Heart left ventricle (tissue), 16 donors: ENCODE measurements at regions of chr7 and their contacts with region 1.

Region 1: DNA sequence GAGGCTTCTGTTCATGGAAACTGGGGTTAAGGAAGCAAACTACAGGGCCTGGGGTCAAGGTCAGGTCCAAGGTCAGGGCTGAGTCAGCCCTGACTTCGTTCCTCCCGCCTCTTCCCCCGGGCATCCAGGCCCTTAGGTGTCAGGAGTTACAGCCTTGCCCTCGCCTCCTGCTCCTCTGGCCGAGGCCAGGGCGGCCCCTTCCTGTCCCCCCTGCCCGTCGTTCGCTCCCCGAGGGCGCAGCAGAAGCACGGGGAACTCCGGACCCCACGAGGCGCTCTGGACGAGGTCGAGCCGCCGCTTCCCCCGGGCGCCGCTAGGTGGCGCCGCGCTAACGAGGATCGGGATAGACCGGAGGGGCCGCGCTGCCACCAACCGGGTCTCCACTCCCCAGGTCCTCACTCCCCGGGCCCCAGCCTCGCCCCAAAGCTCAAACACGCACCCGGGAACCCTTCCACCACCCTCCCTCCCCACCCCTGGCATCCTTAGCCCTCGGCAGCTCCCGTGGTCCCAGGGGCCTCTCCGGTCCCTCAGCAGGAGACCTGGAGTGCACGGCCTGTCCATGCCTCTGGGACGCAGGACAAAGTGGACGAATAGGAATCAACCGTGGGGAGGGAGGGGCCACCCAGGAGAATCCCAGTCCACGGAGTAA is 59.2 kb upstream of the MYL10 start:
- DNase-seq: peak; percentile 73 to 92 (median 80)
- ATAC-seq: peak; percentile 58 to 91 (median 87)
- H3K4me3 ChIP-seq: peak overlapping the region in 9 of 12 donors; percentile 11 to 34 (median 31)
- H3K27ac ChIP-seq: peak overlapping the region in 1 of 12 donors; percentile 31
- H3K4me1 ChIP-seq: peaks cover 0 to 19% (median 10%) of the 10 kb centered on the region in 12 donors
- H3K27me3 ChIP-seq: no peaks in the 10 kb centered on the region
- CTCF ChIP-seq: peak; percentile 92 to 99 (median 96)
- POLR2A ChIP-seq: no peak

Region 2: GRCh38 chr7:101465576-101466196 is 222.6 kb before region 1 on chr7:
- intact Hi-C with region 1: no loop called
- DNase-seq: no peak
- ATAC-seq: no peak
- H3K4me3 ChIP-seq: no peak overlapping the region
- H3K27ac ChIP-seq: no peak overlapping the region
- H3K4me1 ChIP-seq: no peaks in the 10 kb centered on the region
- H3K27me3 ChIP-seq: peaks cover 0 to 11% (median 0%) of the 10 kb centered on the region in 9 donors
- CTCF ChIP-seq: no peak
- POLR2A ChIP-seq: no peak

Region 3: DNA sequence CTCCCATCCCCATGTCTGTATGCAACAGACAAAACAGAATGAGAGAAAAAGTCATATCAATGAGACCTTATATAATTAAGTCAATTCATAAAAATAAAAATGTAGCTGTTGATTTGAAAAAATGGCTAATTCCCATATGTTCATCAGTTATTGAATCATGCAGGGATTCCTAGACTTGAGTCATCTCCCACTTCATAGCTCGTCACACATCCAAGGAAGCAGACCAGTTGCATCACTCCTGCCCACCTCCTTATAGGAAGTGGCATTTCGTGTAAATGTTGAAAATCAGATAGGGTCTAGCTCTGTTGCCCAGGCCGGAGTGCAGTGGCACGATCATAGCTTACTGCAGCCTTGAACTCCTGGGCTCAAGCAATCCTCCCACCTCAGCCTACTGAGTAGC is 542.3 kb after region 1 on chr7:
- intact Hi-C with region 1: loop called in 5 of 10 experiments (anchors 2 to 5 kb)
- DNase-seq: no peak
- ATAC-seq: no peak
- H3K4me3 ChIP-seq: no peak overlapping the region
- H3K27ac ChIP-seq: no peak overlapping the region
- H3K4me1 ChIP-seq: peaks cover 0 to 11% (median 0%) of the 10 kb centered on the region in 12 donors
- H3K27me3 ChIP-seq: no peaks in the 10 kb centered on the region
- CTCF ChIP-seq: no peak
- POLR2A ChIP-seq: no peak

Region 4: GRCh38 chr7:102236592-102237287 is 548.4 kb after region 1 on chr7:
- intact Hi-C with region 1: loop called (anchors 2 to 5 kb)
- DNase-seq: peak in 4 of 5 donors; percentile 45 to 64 (median 58)
- ATAC-seq: peak; percentile 73 to 90 (median 79)
- H3K4me3 ChIP-seq: no peak overlapping the region
- H3K27ac ChIP-seq: no peak overlapping the region
- H3K4me1 ChIP-seq: peaks cover 0 to 11% (median 3%) of the 10 kb centered on the region in 12 donors
- H3K27me3 ChIP-seq: no peaks in the 10 kb centered on the region
- CTCF ChIP-seq: peak; percentile 52 to 90 (median 82)
- POLR2A ChIP-seq: no peak

Region 5: DNA sequence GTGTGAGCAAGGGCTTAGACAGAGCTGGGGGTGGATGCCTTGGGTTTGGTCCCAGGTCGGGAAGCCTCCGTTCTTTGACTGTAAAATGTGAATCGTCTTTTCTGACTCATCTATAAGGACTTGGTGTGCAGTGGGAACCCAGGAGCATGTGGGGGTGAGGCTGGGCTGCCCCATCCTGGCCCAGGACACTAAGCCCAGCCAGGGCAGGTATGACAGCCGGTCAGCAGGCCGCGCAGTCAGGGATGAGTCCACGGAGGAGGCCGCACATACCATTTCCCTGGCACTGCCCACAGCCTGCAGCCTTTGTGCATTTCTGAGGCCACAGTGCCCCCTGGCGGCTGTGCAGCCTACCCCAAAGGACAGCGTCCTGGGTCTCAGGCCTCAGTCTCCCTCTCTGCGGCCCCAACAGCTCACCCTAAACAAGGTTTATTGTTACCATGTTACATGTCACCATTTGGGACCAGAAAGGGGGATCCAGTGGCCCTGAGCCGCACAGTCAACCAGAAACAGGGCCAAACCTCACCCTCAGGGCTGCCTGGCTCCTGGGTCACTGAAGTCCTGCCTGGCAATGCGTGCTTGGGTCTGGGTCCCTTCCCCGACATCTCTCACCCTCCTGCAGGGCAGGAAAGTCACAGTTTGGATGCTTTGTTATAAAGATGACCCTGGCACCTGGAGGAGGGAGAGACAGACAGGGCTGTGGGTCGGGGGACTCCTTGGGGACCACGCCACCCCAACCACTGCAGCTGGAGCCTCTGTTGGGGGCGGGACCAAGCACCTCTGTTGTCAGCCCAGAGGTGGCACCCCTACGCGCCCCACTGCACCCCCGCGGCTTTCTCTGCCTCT is 584.0 kb after region 1 on chr7:
- intact Hi-C with region 1: loop called in 5 of 10 experiments (anchors 2 to 10 kb)
- DNase-seq: peak; percentile 69 to 88 (median 76)
- ATAC-seq: peak; percentile 86 to 90 (median 88)
- H3K4me3 ChIP-seq: no peak overlapping the region
- H3K27ac ChIP-seq: no peak overlapping the region
- H3K4me1 ChIP-seq: peaks cover 0 to 4% (median 0%) of the 10 kb centered on the region in 12 donors
- H3K27me3 ChIP-seq: no peaks in the 10 kb centered on the region
- CTCF ChIP-seq: peak; percentile 85 to 93 (median 88)
- POLR2A ChIP-seq: no peak

Region 6: GRCh38 chr7:102279537-102280400 is 591.5 kb after region 1 on chr7:
- intact Hi-C with region 1: loop called in 3 of 10 experiments (anchors 10 kb)
- DNase-seq: peak in 4 of 5 donors; percentile 43 to 81 (median 50)
- ATAC-seq: peak in 3 of 4 donors; percentile 73 to 79 (median 77)
- H3K4me3 ChIP-seq: no peak overlapping the region
- H3K27ac ChIP-seq: no peak overlapping the region
- H3K4me1 ChIP-seq: peaks cover 0 to 10% (median 0%) of the 10 kb centered on the region in 12 donors
- H3K27me3 ChIP-seq: no peaks in the 10 kb centered on the region
- CTCF ChIP-seq: peak; percentile 68 to 88 (median 83)
- POLR2A ChIP-seq: no peak